Activated CD8-positive, alpha-beta T cell treated with anti-CD3 and anti-CD28 coated beads for 36 hours (primary cell): ENCODE measurements at regions of chr1 and their contacts with region 1.

Region 1: GRCh38 chr1:44721485-44722361 is 9.2 kb downstream of the RNU5D-1 start:
- DNase-seq: peak; percentile 95
- ATAC-seq: peak; percentile 78
- H3K4me3 Mint-ChIP-seq: peak overlapping the region; percentile 72
- H3K27ac Mint-ChIP-seq: peak overlapping the region; percentile 92
- H3K4me1 Mint-ChIP-seq: peaks cover 74% of the 10 kb centered on the region
- H3K27me3 Mint-ChIP-seq: peaks cover 4% of the 10 kb centered on the region
- CTCF ChIP-seq: no peak

Region 2: GRCh38 chr1:44631647-44632539 is 89.8 kb before region 1 on chr1:
- CTCF ChIA-PET with region 1: no interaction called
- POLR2A ChIA-PET with region 1: interaction called, 26 read pairs
- intact Hi-C with region 1: no loop called
- DNase-seq: peak; percentile 96
- ATAC-seq: peak; percentile 84
- H3K4me3 Mint-ChIP-seq: peak overlapping the region; percentile 88
- H3K27ac Mint-ChIP-seq: peak overlapping the region; percentile 97
- H3K4me1 Mint-ChIP-seq: peaks cover 38% of the 10 kb centered on the region
- H3K27me3 Mint-ChIP-seq: no peaks in the 10 kb centered on the region
- CTCF ChIP-seq: no peak

Region 3: GRCh38 chr1:44696789-44697345 is 24.9 kb before region 1 on chr1:
- CTCF ChIA-PET with region 1: interaction called, 5 read pairs
- POLR2A ChIA-PET with region 1: interaction called, 77 read pairs
- intact Hi-C with region 1: no loop called
- DNase-seq: peak; percentile 65
- ATAC-seq: peak; percentile 85
- H3K4me3 Mint-ChIP-seq: peak overlapping the region; percentile 41
- H3K27ac Mint-ChIP-seq: peak overlapping the region; percentile 85
- H3K4me1 Mint-ChIP-seq: peaks cover 37% of the 10 kb centered on the region
- H3K27me3 Mint-ChIP-seq: no peaks in the 10 kb centered on the region
- CTCF ChIP-seq: no peak

Region 4: GRCh38 chr1:44757420-44757819 is 35.7 kb after region 1 on chr1:
- CTCF ChIA-PET with region 1: no interaction called
- POLR2A ChIA-PET with region 1: interaction called, 17 read pairs
- intact Hi-C with region 1: no loop called
- DNase-seq: no peak
- ATAC-seq: no peak
- H3K4me3 Mint-ChIP-seq: no peak overlapping the region
- H3K27ac Mint-ChIP-seq: no peak overlapping the region
- H3K4me1 Mint-ChIP-seq: peaks cover 14% of the 10 kb centered on the region
- H3K27me3 Mint-ChIP-seq: no peaks in the 10 kb centered on the region
- CTCF ChIP-seq: no peak

Region 5: DNA sequence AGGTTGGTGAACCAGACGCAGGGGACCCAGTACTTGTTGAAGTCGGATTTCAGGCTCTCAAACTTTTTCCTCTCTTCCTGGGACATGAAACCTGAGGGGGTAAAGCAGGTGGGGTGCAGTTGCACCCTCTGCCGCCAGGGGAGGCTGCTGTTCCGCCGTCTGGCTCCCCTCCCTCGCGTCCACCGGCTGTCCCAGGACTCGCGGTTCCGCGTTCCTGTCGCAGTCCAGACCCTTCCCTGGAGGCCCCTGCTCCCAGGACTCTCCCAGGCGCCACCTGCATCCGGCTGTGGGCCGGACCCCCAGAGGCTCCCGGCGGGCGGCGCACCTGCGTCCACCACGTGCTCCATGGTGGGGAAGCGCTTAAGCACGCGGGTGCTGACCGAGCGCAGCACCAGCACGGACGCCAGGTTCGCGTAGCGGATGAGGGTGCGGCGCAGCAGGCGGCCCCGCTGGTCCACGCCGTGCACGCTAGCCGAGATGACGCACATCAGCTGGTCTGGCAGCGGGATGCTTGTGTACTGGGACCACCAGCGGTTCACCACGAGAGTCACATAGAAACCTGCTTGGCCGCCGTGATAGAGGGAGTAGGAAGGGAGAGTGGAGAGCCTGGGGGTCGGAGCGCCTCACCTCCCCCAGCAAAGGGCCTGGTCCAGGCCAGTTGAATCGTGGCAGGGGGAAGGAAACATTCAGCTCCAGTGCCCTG is 64.6 kb after region 1 on chr1:
- CTCF ChIA-PET with region 1: interaction called, 3 read pairs
- POLR2A ChIA-PET with region 1: interaction called, 38 read pairs
- intact Hi-C with region 1: no loop called
- DNase-seq: peak; percentile 78
- ATAC-seq: peak; percentile 69
- H3K4me3 Mint-ChIP-seq: peak overlapping the region; percentile 65
- H3K27ac Mint-ChIP-seq: peak overlapping the region; percentile 82
- H3K4me1 Mint-ChIP-seq: peaks cover 33% of the 10 kb centered on the region
- H3K27me3 Mint-ChIP-seq: no peaks in the 10 kb centered on the region
- CTCF ChIP-seq: peak; percentile 100

Region 6: DNA sequence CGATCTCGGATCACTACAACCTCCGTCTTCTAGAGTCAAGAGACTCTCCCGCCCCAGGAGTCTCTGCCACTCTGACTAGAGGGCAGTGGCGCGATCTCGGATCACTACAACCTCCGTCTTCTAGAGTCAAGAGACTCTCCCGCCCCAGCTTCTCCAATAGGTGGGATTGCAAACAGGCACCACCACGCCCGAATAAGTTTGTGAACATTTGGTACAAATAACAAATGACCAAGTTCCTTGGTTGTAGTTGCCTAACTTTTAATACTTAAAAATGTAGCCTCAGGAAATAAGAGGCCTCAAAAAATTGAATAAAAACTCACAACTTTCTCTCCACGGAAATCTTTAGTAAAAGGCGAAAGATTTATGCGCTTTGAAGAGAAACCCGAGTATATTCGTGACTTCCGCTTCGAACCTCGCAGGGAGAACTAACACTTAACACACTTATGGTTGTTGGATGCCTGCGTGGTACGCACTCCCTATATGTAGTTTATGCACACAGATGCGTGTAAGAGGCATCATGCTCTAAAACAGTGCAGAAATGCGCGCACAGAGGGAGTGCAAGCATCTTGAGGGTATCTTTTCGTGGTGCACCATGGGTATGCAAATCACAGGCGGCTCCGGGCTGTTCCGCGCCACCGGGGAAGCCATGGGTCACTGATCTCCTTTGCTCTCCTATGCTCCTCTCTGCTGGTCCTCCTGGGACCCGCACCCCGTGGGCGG is 98.0 kb after region 1 on chr1:
- CTCF ChIA-PET with region 1: interaction called, 6 read pairs
- POLR2A ChIA-PET with region 1: interaction called, 466 read pairs
- intact Hi-C with region 1: loop called (anchors 1 kb)
- DNase-seq: peak; percentile 93
- ATAC-seq: peak; percentile 91
- H3K4me3 Mint-ChIP-seq: peak overlapping the region; percentile 79
- H3K27ac Mint-ChIP-seq: peak overlapping the region; percentile 99
- H3K4me1 Mint-ChIP-seq: peaks cover 33% of the 10 kb centered on the region
- H3K27me3 Mint-ChIP-seq: no peaks in the 10 kb centered on the region
- CTCF ChIP-seq: no peak

Region 7: GRCh38 chr1:44970317-44970716 is 248.6 kb after region 1 on chr1:
- CTCF ChIA-PET with region 1: no interaction called
- POLR2A ChIA-PET with region 1: no interaction called
- intact Hi-C with region 1: no loop called
- DNase-seq: no peak
- ATAC-seq: no peak
- H3K4me3 Mint-ChIP-seq: no peak overlapping the region
- H3K27ac Mint-ChIP-seq: no peak overlapping the region
- H3K4me1 Mint-ChIP-seq: peaks cover 6% of the 10 kb centered on the region
- H3K27me3 Mint-ChIP-seq: no peaks in the 10 kb centered on the region
- CTCF ChIP-seq: no peak

Region 8: DNA sequence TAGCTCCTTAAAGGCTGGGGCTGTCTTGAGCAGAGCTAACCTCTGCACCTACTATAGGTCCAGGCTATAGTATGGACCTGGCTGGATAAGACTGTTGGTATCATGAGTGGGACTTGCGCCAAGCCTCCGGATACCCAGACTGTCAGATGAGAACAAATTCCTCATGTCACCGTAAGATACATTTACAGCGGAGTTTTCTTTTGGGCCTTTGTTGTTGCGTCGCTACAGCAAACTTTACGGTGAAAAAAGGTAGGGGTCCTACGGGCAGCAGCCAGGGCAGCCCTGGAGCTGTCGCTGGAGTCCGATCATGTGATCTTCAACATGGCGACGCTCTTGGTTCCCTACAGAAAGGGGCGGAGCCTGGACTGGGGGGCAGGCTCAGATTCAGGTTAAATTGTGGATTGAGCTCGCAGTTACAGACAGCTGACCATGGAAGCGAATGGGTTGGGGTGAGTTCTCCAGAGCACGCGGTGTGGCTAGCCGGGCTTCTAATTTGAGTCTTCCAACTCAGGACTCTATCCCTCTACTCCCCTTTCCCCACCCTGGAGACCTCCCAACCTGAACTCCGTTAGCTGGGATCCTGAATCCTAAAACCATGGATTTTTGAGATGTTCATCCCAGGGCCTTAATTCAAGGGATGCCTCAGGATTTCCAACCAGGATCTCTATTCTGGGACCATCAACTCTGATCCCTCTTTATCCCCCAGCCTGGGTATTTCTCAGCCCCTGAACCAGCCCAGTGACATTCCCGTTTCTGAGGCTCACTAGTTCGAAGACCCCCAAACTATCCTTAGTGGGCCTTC is 290.3 kb after region 1 on chr1 and contains the start of gene UROD:
- CTCF ChIA-PET with region 1: interaction called, 4 read pairs
- POLR2A ChIA-PET with region 1: interaction called, 12 read pairs
- intact Hi-C with region 1: no loop called
- DNase-seq: peak; percentile 98
- ATAC-seq: peak; percentile 85
- H3K4me3 Mint-ChIP-seq: peak within 1 kb of the TSS; percentile 77
- H3K27ac Mint-ChIP-seq: peak within 1 kb of the TSS; percentile 92
- H3K4me1 Mint-ChIP-seq: peaks cover 31% of the 10 kb centered on the region
- H3K27me3 Mint-ChIP-seq: no peaks in the 10 kb centered on the region
- CTCF ChIP-seq: no peak
- total RNA-seq, gene UROD: 109 to 113 TPM